AG04449 (cell line): ENCODE measurements at regions of chr1 and their contacts with region 1.

Region 1: GRCh38 chr1:19661721-19662228 is 2.9 kb upstream of the HTR6 start:
- DNase-seq: no peak
- H3K4me3 ChIP-seq: no peak overlapping the region
- CTCF ChIP-seq: peak; percentile 34

Region 2: DNA sequence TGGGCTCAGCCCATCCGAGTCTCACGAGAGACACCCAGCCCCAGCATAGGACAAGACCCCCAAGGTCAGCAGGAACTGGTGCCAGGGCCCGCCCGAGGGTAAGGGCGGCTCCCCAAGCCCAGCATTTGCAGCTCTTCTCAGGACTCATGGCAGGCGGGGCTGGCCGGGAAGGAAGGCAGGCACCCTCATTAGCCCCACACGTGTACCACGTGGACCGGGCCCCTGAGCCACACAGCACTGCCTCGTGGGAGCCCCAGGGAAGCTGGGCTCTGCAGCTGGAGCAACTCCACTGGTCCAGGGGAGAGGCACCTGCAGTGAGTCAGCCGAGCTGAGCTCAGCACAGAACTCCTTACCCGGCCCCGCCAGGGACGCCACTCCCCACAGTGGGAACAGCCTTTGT is 607.6 kb before region 1 on chr1:
- CTCF ChIA-PET with region 1: no interaction called
- POLR2A ChIA-PET with region 1: no interaction called
- DNase-seq: no peak
- H3K4me3 ChIP-seq: no peak overlapping the region
- CTCF ChIP-seq: no peak

Region 3: DNA sequence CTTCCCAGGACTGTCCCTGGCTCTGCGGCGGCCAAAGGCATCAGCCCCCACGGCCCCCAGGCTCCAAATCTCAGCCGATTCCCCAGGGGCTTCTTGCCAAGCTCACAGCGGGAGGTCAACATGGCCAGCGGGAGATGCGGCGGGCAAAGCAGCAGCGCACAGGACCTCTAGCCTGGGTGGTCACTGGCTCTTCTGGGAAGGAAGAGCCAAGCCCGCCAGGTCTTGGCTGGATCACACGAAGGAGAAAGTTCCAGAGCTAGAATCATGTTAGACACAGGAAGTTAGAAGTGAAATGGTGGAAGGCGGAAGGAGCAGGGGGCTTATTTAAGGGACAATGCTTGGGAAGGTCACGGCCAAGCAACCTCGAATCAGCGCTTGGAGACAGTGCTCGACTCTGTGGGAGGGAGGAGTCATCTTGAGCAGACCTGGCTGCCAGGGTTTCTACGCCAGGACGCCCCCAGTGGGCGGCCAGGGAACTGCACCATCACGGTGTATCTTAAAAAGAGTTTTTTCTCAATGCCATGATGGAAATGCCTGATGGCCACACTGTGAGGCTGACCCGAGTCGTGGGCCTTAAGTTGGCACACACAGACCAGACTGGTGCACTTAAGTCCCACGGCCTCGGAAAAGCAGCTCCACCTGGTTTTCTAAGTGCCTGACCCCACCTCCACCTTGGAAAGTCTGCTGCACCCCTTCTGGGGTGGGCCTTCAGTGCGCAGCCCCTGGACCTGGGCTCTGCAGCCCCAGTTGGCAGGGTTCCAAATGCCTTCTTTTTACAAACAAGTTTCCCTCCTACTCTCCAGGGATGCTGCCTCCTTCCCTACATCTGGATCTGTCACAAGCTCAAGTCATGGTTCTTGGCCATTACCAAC is 320.3 kb before region 1 on chr1:
- CTCF ChIA-PET with region 1: interaction called, 178 read pairs
- POLR2A ChIA-PET with region 1: no interaction called
- DNase-seq: no peak
- H3K4me3 ChIP-seq: no peak overlapping the region
- CTCF ChIP-seq: peak; percentile 78

Region 4: GRCh38 chr1:19643602-19644394 is 18.0 kb before region 1 on chr1 and contains the start of gene NBL1:
- CTCF ChIA-PET with region 1: interaction called, 67 read pairs
- POLR2A ChIA-PET with region 1: interaction called, 3 read pairs
- DNase-seq: no peak
- H3K4me3 ChIP-seq: peak within 1 kb of the TSS; percentile 70
- CTCF ChIP-seq: no peak

Region 5: DNA sequence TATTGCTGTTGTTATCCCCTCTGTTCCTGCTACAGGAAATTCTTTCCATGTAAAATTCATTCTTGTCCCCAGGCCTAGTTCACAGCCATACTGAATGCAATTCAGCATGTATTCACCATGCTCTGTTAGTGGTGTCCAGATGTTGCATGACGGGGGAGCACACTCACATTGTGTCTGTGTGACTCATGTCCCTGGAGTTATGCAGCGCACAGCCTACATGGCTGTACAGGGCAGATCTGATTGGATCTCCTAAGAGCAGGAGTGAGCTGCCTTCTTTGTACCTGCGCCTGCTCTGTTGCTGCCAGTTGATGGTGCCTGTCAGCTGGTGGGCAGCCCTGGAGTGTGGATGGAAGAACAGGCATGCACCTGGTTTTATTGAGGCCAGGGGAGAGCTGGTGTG is 20.5 kb after region 1 on chr1:
- CTCF ChIA-PET with region 1: interaction called, 103 read pairs
- POLR2A ChIA-PET with region 1: no interaction called
- DNase-seq: peak; percentile 67
- H3K4me3 ChIP-seq: no peak overlapping the region
- CTCF ChIP-seq: no peak

Region 6: DNA sequence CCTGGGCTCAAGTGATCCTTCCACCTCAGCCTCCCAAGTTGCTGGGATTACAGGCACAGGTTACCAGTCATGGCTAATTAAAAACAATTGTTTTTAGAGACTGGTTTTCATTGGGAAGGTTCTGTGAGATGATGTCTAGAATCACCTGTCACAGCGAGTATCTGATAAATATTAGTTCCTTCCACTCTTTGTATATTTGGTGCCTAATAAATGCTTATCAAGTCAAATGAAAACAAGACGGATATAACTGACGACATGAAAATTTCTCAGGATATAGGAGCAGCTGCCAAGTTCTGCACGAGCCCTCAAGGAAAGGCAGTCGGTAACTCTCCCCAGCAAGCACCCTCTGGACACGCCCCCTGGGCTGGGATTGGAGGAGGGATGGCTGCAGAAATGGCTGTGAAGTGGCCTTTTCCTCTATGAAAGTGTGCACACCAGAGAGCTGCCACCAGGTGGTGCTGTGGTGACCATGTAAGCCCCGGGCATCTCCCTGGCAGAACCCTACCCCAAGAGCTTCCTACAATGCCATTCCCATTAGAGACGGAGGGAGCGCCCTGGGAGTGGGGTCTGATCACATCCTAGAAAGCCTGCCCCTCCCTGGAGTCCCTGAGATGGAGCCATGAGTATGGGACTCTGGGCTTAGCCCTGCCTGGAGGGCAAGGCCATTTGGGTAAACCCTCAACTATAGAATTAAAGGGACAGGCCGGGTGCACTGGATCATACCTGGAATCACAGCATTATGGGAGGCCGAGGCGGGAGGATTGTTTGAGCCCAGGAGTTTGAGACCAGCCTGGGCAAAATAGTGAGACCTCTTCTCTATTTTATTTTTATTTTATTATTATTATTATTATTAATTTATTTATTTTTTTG is 53.8 kb after region 1 on chr1:
- CTCF ChIA-PET with region 1: interaction called, 15 read pairs
- POLR2A ChIA-PET with region 1: no interaction called
- DNase-seq: peak; percentile 69
- H3K4me3 ChIP-seq: no peak overlapping the region
- CTCF ChIP-seq: peak; percentile 95